ENCODE measurements at regions of chr11 and their contacts with region 1.

Region 1: GRCh38 chr11:4187055-4187988 is 92.7 kb downstream of the RRM1 start:
- DNase-seq: peak; percentile 87
- ATAC-seq: peak; percentile 95
- H3K4me3 Mint-ChIP-seq: peak overlapping the region; percentile 68
- H3K27ac Mint-ChIP-seq: no peak overlapping the region
- H3K4me1 Mint-ChIP-seq: peaks cover 16% of the 10 kb centered on the region
- H3K27me3 Mint-ChIP-seq: peaks cover 10% of the 10 kb centered on the region

Region 2: GRCh38 chr11:4203603-4204360 is 16.5 kb after region 1 on chr11:
- CTCF ChIA-PET with region 1: interaction called, 22 read pairs
- DNase-seq: no peak
- ATAC-seq: no peak
- H3K4me3 Mint-ChIP-seq: no peak overlapping the region
- H3K27ac Mint-ChIP-seq: no peak overlapping the region
- H3K4me1 Mint-ChIP-seq: no peaks in the 10 kb centered on the region
- H3K27me3 Mint-ChIP-seq: peaks cover 24% of the 10 kb centered on the region

Region 3: GRCh38 chr11:4539603-4540219 is 352.4 kb after region 1 on chr11:
- CTCF ChIA-PET with region 1: interaction called, 61 read pairs
- DNase-seq: peak; percentile 57
- ATAC-seq: peak; percentile 69
- H3K4me3 Mint-ChIP-seq: no peak overlapping the region
- H3K27ac Mint-ChIP-seq: no peak overlapping the region
- H3K4me1 Mint-ChIP-seq: no peaks in the 10 kb centered on the region
- H3K27me3 Mint-ChIP-seq: peaks cover 9% of the 10 kb centered on the region

Region 4: DNA sequence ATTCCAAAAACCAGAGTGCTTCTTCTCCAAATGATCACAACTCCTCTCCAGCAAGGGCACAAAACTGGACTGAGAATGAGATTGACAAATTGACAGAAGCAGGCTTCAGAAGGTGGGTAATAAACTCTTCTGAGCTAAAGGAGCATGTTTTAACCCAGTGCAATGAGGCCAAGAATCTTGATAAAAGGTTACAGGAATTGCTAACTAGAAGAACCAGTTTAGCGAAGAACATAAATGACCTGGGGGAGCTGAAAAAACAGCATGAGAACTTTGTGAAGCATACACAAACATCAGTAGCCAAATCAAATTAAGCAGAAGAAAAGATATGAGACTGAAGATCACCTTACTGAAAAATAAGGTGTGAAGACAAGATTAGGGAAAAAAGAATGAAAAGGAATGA is 373.1 kb after region 1 on chr11:
- CTCF ChIA-PET with region 1: no interaction called
- DNase-seq: no peak
- ATAC-seq: no peak
- H3K4me3 Mint-ChIP-seq: no peak overlapping the region
- H3K27ac Mint-ChIP-seq: no peak overlapping the region
- H3K4me1 Mint-ChIP-seq: no peaks in the 10 kb centered on the region
- H3K27me3 Mint-ChIP-seq: peaks cover 36% of the 10 kb centered on the region

Region 5: GRCh38 chr11:4607781-4608666 is 420.7 kb after region 1 on chr11 and contains the start of gene TRIM68:
- CTCF ChIA-PET with region 1: interaction called, 21 read pairs
- DNase-seq: peak; percentile 97
- ATAC-seq: peak; percentile 100
- H3K4me3 Mint-ChIP-seq: peak within 1 kb of the TSS; percentile 87
- H3K27ac Mint-ChIP-seq: peak within 1 kb of the TSS; percentile 92
- H3K4me1 Mint-ChIP-seq: peaks cover 41% of the 10 kb centered on the region
- H3K27me3 Mint-ChIP-seq: no peaks in the 10 kb centered on the region
- total RNA-seq, gene TRIM68: 14.9 to 15.9 TPM

Region 6: DNA sequence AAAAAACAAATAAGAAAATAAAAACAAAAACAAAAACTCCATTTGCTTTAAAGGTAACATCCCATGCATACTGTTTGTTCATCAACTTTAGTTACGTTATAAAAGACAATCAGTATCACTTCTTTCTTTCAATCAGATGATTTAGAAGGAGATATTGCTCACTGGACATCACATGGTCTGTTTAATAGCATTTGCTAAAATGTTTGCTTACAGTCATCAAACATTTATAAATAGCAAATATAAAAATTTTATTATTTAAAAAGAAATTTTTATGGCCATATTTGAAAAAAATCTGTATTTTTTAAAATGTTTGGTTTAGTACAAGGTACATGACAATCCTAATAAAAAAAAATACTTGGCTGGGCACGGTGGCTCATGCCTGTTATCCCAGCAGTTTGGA is 539.8 kb after region 1 on chr11:
- CTCF ChIA-PET with region 1: no interaction called
- DNase-seq: no peak
- ATAC-seq: no peak
- H3K4me3 Mint-ChIP-seq: no peak overlapping the region
- H3K27ac Mint-ChIP-seq: no peak overlapping the region
- H3K4me1 Mint-ChIP-seq: no peaks in the 10 kb centered on the region
- H3K27me3 Mint-ChIP-seq: no peaks in the 10 kb centered on the region

Measured in activated CD8-positive, alpha-beta memory T cell treated with anti-CD3 and anti-CD28 coated beads, Interleukin-2, amount 10 ng/mL, durations not matched to agents 7 days and 5 days (primary cell).